Body of pancreas (tissue), 4 donors: ENCODE measurements at regions of chr15 and their contacts with region 1.

Region 1: GRCh38 chr15:49962044-49962602 is 156.9 kb downstream of the ATP8B4 start:
- DNase-seq: no peak
- ATAC-seq: no peak
- H3K4me3 ChIP-seq: no peak overlapping the region
- H3K27ac ChIP-seq: no peak overlapping the region
- H3K4me1 ChIP-seq: no peaks in the 10 kb centered on the region
- H3K27me3 ChIP-seq: no peaks in the 10 kb centered on the region
- CTCF ChIP-seq: no peak
- POLR2A ChIP-seq: no peak

Region 2: GRCh38 chr15:50024281-50024680 is 62.2 kb after region 1 on chr15:
- intact Hi-C with region 1: loop called (anchors 10 kb)
- DNase-seq: no peak
- ATAC-seq: no peak
- H3K4me3 ChIP-seq: no peak overlapping the region
- H3K27ac ChIP-seq: no peak overlapping the region
- H3K4me1 ChIP-seq: no peaks in the 10 kb centered on the region
- H3K27me3 ChIP-seq: no peaks in the 10 kb centered on the region
- CTCF ChIP-seq: no peak
- POLR2A ChIP-seq: no peak

Region 3: GRCh38 chr15:50162988-50163718 is 201.0 kb after region 1 on chr15:
- intact Hi-C with region 1: no loop called
- DNase-seq: no peak
- ATAC-seq: no peak
- H3K4me3 ChIP-seq: no peak overlapping the region
- H3K27ac ChIP-seq: no peak overlapping the region
- H3K4me1 ChIP-seq: no peaks in the 10 kb centered on the region
- H3K27me3 ChIP-seq: no peaks in the 10 kb centered on the region
- CTCF ChIP-seq: no peak
- POLR2A ChIP-seq: no peak